Activated T-helper 1 cell treated with anti-CD3 and anti-CD28 coated beads, Interleukin-12 subunit alpha, Interleukin-12 subunit beta, Interleukin-2, Interleukin-4 antibody, amounts not matched to agents 30 ng/mL and 10 ng/mL and 1 ng/mL, durations not matched to agents 14 hours and 24 hours and 36 hours (primary cell): ENCODE measurements at regions of chr19 and their contacts with region 1.

Region 1: GRCh38 chr19:34364830-34365462 is at the start of gene GPI:
- DNase-seq: peak; percentile 55
- H3K4me3 Mint-ChIP-seq: peak within 1 kb of the TSS; percentile 100
- H3K27ac Mint-ChIP-seq: peak within 1 kb of the TSS; percentile 95
- H3K4me1 Mint-ChIP-seq: peaks cover 51% of the 10 kb centered on the region
- H3K27me3 Mint-ChIP-seq: no peaks in the 10 kb centered on the region
- total RNA-seq, gene GPI: 502 and 509 TPM in 2 replicates

Region 2: DNA sequence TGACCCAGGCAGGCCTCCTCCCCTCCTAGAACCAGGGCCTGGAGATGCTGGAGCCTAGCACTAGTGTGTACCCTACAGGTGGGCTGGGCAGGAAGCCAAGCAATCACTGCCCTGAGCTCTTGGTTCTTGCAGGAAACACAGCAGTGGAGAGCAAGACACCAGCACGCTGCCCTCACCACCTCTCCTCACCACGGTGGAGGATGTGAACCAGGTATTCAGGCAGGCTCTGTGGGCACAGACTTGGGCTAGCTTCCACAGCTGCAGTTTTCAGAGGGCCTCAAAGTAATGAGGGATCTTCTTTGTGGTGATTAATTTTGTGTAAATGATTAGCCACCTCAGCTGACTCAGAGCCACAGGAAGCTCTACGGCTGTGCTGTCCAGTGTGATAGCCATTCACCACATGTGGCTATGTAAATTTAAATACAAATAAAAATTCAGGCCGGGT is 13.5 kb before region 1 on chr19:
- intact Hi-C with region 1: loop called (anchors 2 kb)
- DNase-seq: peak; percentile 11
- H3K4me3 Mint-ChIP-seq: peak overlapping the region; percentile 47
- H3K27ac Mint-ChIP-seq: peak overlapping the region; percentile 80
- H3K4me1 Mint-ChIP-seq: peaks cover 29% of the 10 kb centered on the region
- H3K27me3 Mint-ChIP-seq: no peaks in the 10 kb centered on the region

Region 3: GRCh38 chr19:34404109-34404897 is 39.4 kb after region 1 on chr19 and contains the start of gene PDCD2L:
- intact Hi-C with region 1: loop called (anchors 1 kb)
- DNase-seq: peak; percentile 89
- H3K4me3 Mint-ChIP-seq: peak within 1 kb of the TSS; percentile 94
- H3K27ac Mint-ChIP-seq: peak within 1 kb of the TSS; percentile 86
- H3K4me1 Mint-ChIP-seq: peaks cover 13% of the 10 kb centered on the region
- H3K27me3 Mint-ChIP-seq: no peaks in the 10 kb centered on the region
- total RNA-seq, gene PDCD2L: 51.3 and 52.3 TPM in 2 replicates